Activated B cell treated with CpG ODN at 0.5 μM for 24 hours (primary cell): ENCODE measurements at regions of chr2 and their contacts with region 1.

Region 1: GRCh38 chr2:45643543-45644542 is 7.6 kb upstream of the PRKCE start:
- DNase-seq: peak; percentile 83
- ATAC-seq: peak; percentile 99
- H3K4me3 Mint-ChIP-seq: peak overlapping the region; percentile 77
- H3K27ac Mint-ChIP-seq: no peak overlapping the region
- H3K4me1 Mint-ChIP-seq: peaks cover 14% of the 10 kb centered on the region
- H3K27me3 Mint-ChIP-seq: peaks cover 5% of the 10 kb centered on the region
- CTCF ChIP-seq: peak; percentile 95

Region 2: DNA sequence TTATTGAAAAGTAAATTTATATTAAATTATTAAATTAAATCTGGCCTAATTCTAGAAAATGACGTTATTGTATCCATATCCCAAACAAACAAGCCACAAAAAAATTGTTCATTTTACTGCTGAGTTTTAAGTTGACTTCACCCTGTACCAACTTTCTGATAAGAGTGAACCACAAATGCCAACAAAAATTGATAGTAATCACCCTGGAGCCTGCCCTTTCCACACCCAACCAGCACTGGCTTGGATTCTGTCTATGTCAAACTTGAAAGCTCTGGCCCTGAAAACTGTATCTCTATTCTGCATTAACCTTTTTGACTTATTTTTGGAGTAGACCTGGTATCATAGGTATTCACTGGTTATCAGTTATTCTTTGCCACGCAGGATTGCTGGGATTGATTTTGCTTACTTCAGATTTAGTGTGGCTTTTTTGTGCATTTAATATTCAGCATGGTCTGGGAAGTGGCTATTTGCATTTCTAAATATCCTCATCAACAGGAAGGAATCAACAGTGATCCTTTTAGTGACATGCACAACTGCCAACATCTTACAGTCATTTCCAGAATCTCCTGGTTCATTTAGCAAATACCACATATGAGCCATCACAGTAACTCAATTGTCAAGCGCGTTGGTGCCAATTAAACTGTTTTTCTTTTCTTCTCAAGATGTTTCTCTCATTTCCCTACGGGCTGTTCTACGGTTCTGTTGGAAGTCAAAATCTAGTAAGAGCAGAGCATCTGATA is 21.3 kb before region 1 on chr2:
- CTCF ChIA-PET with region 1: no interaction called
- POLR2A ChIA-PET with region 1: no interaction called
- intact Hi-C with region 1: no loop called
- DNase-seq: no peak
- ATAC-seq: no peak
- H3K4me3 Mint-ChIP-seq: no peak overlapping the region
- H3K27ac Mint-ChIP-seq: no peak overlapping the region
- H3K4me1 Mint-ChIP-seq: no peaks in the 10 kb centered on the region
- H3K27me3 Mint-ChIP-seq: peaks cover 7% of the 10 kb centered on the region
- CTCF ChIP-seq: no peak

Region 3: GRCh38 chr2:45778720-45779171 is 134.9 kb after region 1 on chr2:
- CTCF ChIA-PET with region 1: interaction called, 86 read pairs
- POLR2A ChIA-PET with region 1: no interaction called
- intact Hi-C with region 1: loop called (anchors 1 kb)
- DNase-seq: peak; percentile 35
- ATAC-seq: peak; percentile 83
- H3K4me3 Mint-ChIP-seq: peak overlapping the region; percentile 44
- H3K27ac Mint-ChIP-seq: peak overlapping the region; percentile 39
- H3K4me1 Mint-ChIP-seq: peaks cover 76% of the 10 kb centered on the region
- H3K27me3 Mint-ChIP-seq: no peaks in the 10 kb centered on the region
- CTCF ChIP-seq: no peak

Region 4: DNA sequence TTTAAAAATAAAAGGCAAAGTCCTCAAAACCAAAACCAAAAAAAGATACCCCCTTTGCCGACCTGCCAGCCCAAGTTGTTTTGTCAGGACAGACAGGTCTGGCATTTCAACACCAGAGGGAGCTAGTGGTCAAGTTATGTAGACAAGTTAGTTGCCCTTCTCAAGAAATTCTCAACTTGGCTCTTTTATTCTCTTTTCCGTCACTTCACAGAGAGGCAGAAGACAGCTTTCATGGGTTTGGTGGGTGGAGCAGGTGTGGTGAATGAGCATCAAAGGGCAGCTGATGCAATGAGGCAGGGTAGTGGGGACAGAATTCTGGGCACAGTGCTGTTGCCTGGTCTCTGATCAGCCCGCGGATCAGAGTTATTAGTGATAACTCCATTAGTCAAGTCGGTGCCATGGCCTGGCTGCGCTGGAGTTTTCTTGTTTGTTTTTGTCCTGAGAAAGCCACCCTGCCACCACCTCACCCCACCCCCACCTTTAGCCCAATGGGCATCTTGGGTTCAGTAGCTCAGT is 349.7 kb after region 1 on chr2:
- CTCF ChIA-PET with region 1: interaction called, 5 read pairs
- POLR2A ChIA-PET with region 1: no interaction called
- intact Hi-C with region 1: loop called (anchors 1 kb)
- DNase-seq: no peak
- ATAC-seq: peak; percentile 47
- H3K4me3 Mint-ChIP-seq: no peak overlapping the region
- H3K27ac Mint-ChIP-seq: no peak overlapping the region
- H3K4me1 Mint-ChIP-seq: no peaks in the 10 kb centered on the region
- H3K27me3 Mint-ChIP-seq: no peaks in the 10 kb centered on the region
- CTCF ChIP-seq: peak; percentile 61

Region 5: DNA sequence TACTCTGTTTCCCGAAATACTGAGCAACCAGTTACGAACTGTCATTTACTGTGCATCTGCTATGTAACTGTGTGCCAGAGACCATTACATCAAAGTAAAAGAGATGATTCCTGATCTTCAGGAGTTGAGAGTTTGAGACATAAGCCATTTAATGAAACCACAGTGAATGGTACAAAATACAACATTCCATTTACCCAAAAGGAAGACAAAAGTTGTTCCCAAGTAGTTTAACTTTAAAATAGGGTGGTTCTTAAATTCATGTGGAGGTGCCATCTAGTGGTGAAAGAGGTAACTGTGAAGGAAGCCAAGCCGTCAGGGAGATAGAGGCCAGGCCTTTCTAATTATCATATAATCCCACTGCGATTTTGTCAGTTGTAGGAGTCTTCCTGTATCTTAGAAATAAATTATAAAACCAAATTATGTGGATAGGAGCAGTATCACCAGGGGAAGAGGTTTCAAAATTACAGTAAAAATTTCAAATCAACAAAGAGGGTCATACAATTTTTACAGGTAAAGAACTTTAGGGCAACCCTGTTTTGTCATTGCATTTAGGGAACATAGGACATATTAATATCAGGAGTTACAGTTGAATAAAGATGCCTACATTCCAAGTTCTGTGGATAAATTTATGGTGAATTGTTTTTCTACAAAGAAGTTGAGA is 721.1 kb after region 1 on chr2:
- CTCF ChIA-PET with region 1: no interaction called
- POLR2A ChIA-PET with region 1: no interaction called
- intact Hi-C with region 1: loop called (anchors 2 kb)
- DNase-seq: no peak
- ATAC-seq: no peak
- H3K4me3 Mint-ChIP-seq: no peak overlapping the region
- H3K27ac Mint-ChIP-seq: no peak overlapping the region
- H3K4me1 Mint-ChIP-seq: peaks cover 19% of the 10 kb centered on the region
- H3K27me3 Mint-ChIP-seq: no peaks in the 10 kb centered on the region
- CTCF ChIP-seq: peak; percentile 74